Gastrocnemius medialis (tissue), 4 donors: ENCODE measurements at regions of chr6 and their contacts with region 1.

Region 1: GRCh38 chr6:8063761-8064637 is at the start of gene BLOC1S5:
- DNase-seq: peak; percentile 93 to 96
- ATAC-seq: peak; percentile 99 to 100
- H3K4me3 ChIP-seq: peak within 1 kb of the TSS; percentile 88 to 98 (median 92)
- H3K27ac ChIP-seq: peak within 1 kb of the TSS; percentile 82 to 90 (median 88)
- H3K4me1 ChIP-seq: peaks cover 9 to 11% of the 10 kb centered on the region in 2 donors
- H3K27me3 ChIP-seq: no peaks in the 10 kb centered on the region
- CTCF ChIP-seq: peak in 2 of 5 experiments; percentile 14 to 35
- POLR2A ChIP-seq: peak; percentile 57 to 62
- total RNA-seq, gene BLOC1S5: 5.4 to 13.6 (median 9.4) TPM

Region 2: DNA sequence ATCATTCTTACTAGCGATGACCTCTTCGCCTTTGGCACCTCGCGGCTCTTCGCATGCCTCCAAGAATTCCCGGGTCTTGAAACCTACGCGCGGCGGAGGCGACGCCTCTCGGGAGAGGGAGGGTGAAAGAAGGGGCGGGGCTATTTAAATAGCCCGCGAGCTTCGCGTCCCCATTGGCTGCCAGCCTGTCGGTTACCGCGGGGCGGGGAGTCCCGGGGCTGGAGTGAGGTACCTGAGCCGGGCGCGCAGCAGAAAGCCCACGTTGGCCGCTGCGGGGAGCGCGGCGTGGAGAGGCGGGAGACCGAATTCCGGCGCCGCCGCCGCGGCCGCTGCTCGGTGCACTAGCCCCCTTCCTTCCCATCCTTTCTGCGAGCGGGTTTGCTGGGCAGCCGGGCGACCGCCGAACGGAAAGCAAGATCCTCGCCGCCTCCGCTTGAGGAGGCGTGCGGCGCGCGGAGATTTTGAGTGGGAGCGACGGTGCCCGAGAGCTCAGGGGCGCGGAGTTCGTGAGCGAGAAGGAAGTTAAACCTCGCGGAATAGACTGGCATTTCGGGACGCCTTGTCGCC is 338.1 kb before region 1 on chr6 and contains the start of gene BMP6:
- in situ Hi-C with region 1: loop called in 1 of 4 experiments (anchors 5 kb)
- intact Hi-C with region 1: loop called (anchors 1 kb)
- DNase-seq: peak; percentile 69 to 70
- ATAC-seq: peak; percentile 87 to 89
- H3K4me3 ChIP-seq: peak within 1 kb of the TSS; percentile 57 to 84 (median 68)
- H3K27ac ChIP-seq: no peak within 1 kb of the TSS
- H3K4me1 ChIP-seq: peaks cover 12 to 21% of the 10 kb centered on the region in 2 donors
- H3K27me3 ChIP-seq: peaks cover 34 to 43% (median 36%) of the 10 kb centered on the region in 3 donors
- CTCF ChIP-seq: peak in 1 of 5 experiments; percentile 8
- POLR2A ChIP-seq: peak; percentile 42 to 64
- total RNA-seq, gene BMP6: 1.7 to 8.3 (median 3.3) TPM

Region 3: DNA sequence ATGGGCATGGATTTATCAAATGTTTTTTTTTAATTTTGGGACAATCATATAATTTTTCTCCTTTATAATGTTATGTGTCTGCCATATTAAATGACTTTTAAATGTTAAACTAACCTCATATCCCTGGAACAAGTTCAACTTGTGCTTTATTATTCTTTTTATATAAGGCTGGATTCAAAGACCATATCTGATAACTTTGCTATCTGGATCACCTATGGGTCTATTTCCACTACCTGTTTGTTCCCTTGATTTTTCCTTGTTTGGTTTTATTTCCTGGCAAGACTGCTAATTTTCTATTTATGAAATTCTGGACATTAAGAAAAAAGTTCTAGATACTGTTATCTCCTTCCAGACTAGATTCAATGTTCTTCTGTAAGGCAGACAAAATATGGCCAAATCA is 212.2 kb before region 1 on chr6:
- in situ Hi-C with region 1: no loop called
- intact Hi-C with region 1: no loop called
- DNase-seq: no peak
- ATAC-seq: no peak
- H3K4me3 ChIP-seq: no peak overlapping the region
- H3K27ac ChIP-seq: no peak overlapping the region
- H3K4me1 ChIP-seq: no peaks in the 10 kb centered on the region
- H3K27me3 ChIP-seq: no peaks in the 10 kb centered on the region
- CTCF ChIP-seq: no peak
- POLR2A ChIP-seq: no peak

Region 4: GRCh38 chr6:7900621-7901020 is 163.4 kb before region 1 on chr6:
- in situ Hi-C with region 1: no loop called
- intact Hi-C with region 1: loop called (anchors 5 kb)
- DNase-seq: no peak
- ATAC-seq: no peak
- H3K4me3 ChIP-seq: no peak overlapping the region
- H3K27ac ChIP-seq: peak overlapping the region in 1 of 4 donors; percentile 60
- H3K4me1 ChIP-seq: peaks cover 31 to 36% of the 10 kb centered on the region in 2 donors
- H3K27me3 ChIP-seq: no peaks in the 10 kb centered on the region
- CTCF ChIP-seq: no peak
- POLR2A ChIP-seq: no peak

Region 5: GRCh38 chr6:8085053-8085511 is 21.1 kb after region 1 on chr6:
- in situ Hi-C with region 1: no loop called
- intact Hi-C with region 1: loop called (anchors 2 kb)
- DNase-seq: peak in 1 of 2 donors; percentile 54
- ATAC-seq: peak; percentile 30 to 73
- H3K4me3 ChIP-seq: no peak overlapping the region
- H3K27ac ChIP-seq: peak overlapping the region in 2 of 4 donors; percentile 31 to 40
- H3K4me1 ChIP-seq: peaks cover 19 to 27% of the 10 kb centered on the region in 2 donors
- H3K27me3 ChIP-seq: no peaks in the 10 kb centered on the region
- CTCF ChIP-seq: no peak
- POLR2A ChIP-seq: no peak

Region 6: GRCh38 chr6:8102122-8102958 is 38.3 kb after region 1 on chr6 and contains the start of gene EEF1E1:
- in situ Hi-C with region 1: no loop called
- intact Hi-C with region 1: loop called (anchors 2 kb)
- DNase-seq: peak; percentile 91 to 93
- ATAC-seq: peak; percentile 100
- H3K4me3 ChIP-seq: peak within 1 kb of the TSS; percentile 64 to 92 (median 84)
- H3K27ac ChIP-seq: peak within 1 kb of the TSS; percentile 68 to 81 (median 74)
- H3K4me1 ChIP-seq: peaks cover 7 to 9% of the 10 kb centered on the region in 2 donors
- H3K27me3 ChIP-seq: peaks cover 0 to 10% (median 8%) of the 10 kb centered on the region in 3 donors
- CTCF ChIP-seq: no peak
- POLR2A ChIP-seq: peak in 1 of 2 donors; percentile 26
- total RNA-seq, gene EEF1E1: 16.0 to 39.9 (median 21.2) TPM

Region 7: DNA sequence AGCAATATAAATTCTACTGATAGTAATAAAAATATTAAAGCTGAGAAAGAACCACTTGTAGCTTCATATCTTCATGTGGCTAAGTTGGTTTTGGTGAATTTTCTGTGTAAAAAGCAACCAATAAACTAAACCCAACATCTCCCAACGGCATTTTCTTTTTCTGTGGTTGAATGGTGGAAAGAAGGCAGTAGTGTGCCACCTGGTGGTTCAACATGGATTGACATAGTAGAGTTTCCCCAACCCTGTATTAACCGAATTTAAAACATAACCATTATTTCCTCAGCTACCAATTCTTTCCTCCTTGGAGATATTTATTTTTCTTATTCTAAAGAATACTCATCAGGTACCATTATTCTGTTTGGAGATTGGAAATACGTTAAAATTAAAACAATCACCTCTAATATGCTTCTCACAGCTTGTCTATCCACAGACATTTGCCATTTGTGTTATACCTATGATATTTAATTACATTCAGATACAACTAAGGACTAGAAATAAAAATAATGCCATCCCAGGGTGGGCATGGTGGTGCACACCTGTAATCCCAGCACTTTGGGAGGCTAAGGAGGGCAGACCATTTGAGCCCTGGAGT is 155.4 kb after region 1 on chr6:
- in situ Hi-C with region 1: no loop called
- intact Hi-C with region 1: loop called (anchors 5 kb)
- DNase-seq: no peak
- ATAC-seq: no peak
- H3K4me3 ChIP-seq: no peak overlapping the region
- H3K27ac ChIP-seq: no peak overlapping the region
- H3K4me1 ChIP-seq: no peaks in the 10 kb centered on the region
- H3K27me3 ChIP-seq: no peaks in the 10 kb centered on the region
- CTCF ChIP-seq: peak; percentile 21 to 67 (median 44)
- POLR2A ChIP-seq: no peak

Region 8: GRCh38 chr6:8435160-8435852 is 371.3 kb after region 1 on chr6 and contains the start of gene SLC35B3:
- in situ Hi-C with region 1: no loop called
- intact Hi-C with region 1: loop called (anchors 10 kb)
- DNase-seq: peak; percentile 89 to 91
- ATAC-seq: peak; percentile 96 to 97
- H3K4me3 ChIP-seq: peak within 1 kb of the TSS; percentile 87 to 94 (median 92)
- H3K27ac ChIP-seq: peak within 1 kb of the TSS; percentile 81 to 92 (median 84)
- H3K4me1 ChIP-seq: peaks cover 20 to 33% of the 10 kb centered on the region in 2 donors
- H3K27me3 ChIP-seq: no peaks in the 10 kb centered on the region
- CTCF ChIP-seq: no peak
- POLR2A ChIP-seq: peak; percentile 65 to 72
- total RNA-seq, gene SLC35B3: 2.2 to 5.6 (median 3.2) TPM